PC-9 (cell line): ENCODE measurements at regions of chr6 and their contacts with region 1.

Region 1: DNA sequence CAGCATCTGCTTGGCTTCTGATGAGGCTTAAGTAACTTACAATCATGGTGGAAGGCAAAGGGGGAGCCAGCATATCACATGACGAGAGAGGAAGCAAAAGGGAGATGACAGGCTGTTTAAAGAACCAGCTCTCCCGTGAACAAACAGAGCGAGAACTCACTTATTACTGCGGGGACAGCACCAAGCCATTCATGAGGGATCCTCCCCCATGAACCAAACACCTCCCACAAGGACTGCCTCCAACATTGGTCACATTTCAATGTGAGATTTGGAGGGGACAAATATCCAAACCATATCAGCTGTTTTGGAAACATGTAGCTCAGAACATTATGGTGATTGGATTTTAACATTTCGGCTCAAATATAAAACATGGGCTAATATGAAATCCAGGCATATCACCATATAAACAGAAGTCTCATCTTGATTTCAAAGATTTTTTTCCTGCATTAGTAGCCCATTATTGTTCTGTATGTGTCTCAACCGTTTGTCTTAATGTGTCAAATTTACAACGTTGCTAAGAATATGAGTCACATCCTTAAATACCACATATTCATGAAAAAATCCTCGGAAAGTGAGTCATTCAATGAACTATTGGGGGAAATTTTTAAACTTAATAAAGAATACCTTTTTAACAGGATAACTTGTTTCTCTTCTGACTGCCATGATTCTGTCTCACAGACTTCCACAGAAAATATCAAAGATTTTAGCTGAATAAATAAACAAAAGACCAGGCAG is 894.3 kb downstream of the TFAP2A start:
- DNase-seq: peak in 1 of 2 experiments; percentile 70
- H3K4me3 ChIP-seq: no peak overlapping the region
- H3K27ac ChIP-seq: 0 out of 2 replicates have a peak overlapping the region, but pooled peaks have one; percentile 12
- H3K4me1 ChIP-seq: peaks cover 39% of the 10 kb centered on the region
- H3K27me3 ChIP-seq: no peaks in the 10 kb centered on the region
- CTCF ChIP-seq: no peak

Region 2: GRCh38 chr6:9405369-9405768 is 115.2 kb before region 1 on chr6:
- CTCF ChIA-PET with region 1: no interaction called
- POLR2A ChIA-PET with region 1: no interaction called
- intact Hi-C with region 1: loop called (anchors 5 kb)
- DNase-seq: peak; percentile 45 to 79
- H3K4me3 ChIP-seq: peak overlapping the region; percentile 31; the same call in 1 of the 2 replicates
- H3K27ac ChIP-seq: 0 out of 2 replicates have a peak overlapping the region, but pooled peaks have one; percentile 12
- H3K4me1 ChIP-seq: peaks cover 16% of the 10 kb centered on the region
- H3K27me3 ChIP-seq: no peaks in the 10 kb centered on the region
- CTCF ChIP-seq: no peak

Region 3: GRCh38 chr6:9532571-9533557 is 12.3 kb after region 1 on chr6:
- CTCF ChIA-PET with region 1: no interaction called
- POLR2A ChIA-PET with region 1: no interaction called
- intact Hi-C with region 1: no loop called
- DNase-seq: peak; percentile 26 to 58
- H3K4me3 ChIP-seq: no peak overlapping the region
- H3K27ac ChIP-seq: peak overlapping the region; percentile 67
- H3K4me1 ChIP-seq: peaks cover 14% of the 10 kb centered on the region
- H3K27me3 ChIP-seq: no peaks in the 10 kb centered on the region
- CTCF ChIP-seq: no peak